ENCODE measurements at regions of chr2 and their contacts with region 1.

Region 1: GRCh38 chr2:161381546-161381945 is 34.6 kb upstream of the TBR1 start:
- DNase-seq: no peak
- ATAC-seq: no peak
- H3K4me3 ChIP-seq: no peak overlapping the region
- H3K27ac ChIP-seq: no peak overlapping the region
- H3K4me1 ChIP-seq: no peaks in the 10 kb centered on the region
- H3K27me3 ChIP-seq: no peaks in the 10 kb centered on the region
- CTCF ChIP-seq: no peak
- POLR2A ChIP-seq: no peak
- RAD21 ChIP-seq: no peak

Region 2: DNA sequence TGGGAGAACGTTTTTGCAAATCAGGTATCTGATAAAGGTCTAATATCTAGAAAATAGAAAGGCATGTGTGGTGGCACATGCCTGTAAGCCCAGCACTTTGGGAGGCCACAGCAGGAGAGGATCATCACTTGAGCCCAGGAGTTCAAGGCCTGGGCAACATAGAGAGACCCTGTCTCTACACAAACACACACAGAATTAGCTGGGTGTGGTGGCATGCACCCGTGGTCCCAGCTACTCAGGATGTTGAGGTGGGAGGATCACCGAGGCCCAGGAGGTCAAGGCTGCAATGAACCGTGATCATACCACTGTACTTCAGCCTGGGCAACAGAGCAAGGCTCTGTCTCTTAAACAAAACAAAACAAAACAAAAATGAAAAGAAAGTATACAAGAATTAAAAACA is 20.8 kb after region 1 on chr2:
- CTCF ChIA-PET with region 1: no interaction called
- POLR2A ChIA-PET with region 1: no interaction called
- dilution Hi-C with region 1: no loop called
- in situ Hi-C with region 1: no loop called
- intact Hi-C with region 1: no loop called
- DNase-seq: no peak
- ATAC-seq: no peak
- H3K4me3 ChIP-seq: no peak overlapping the region
- H3K27ac ChIP-seq: no peak overlapping the region
- H3K4me1 ChIP-seq: no peaks in the 10 kb centered on the region
- H3K27me3 ChIP-seq: no peaks in the 10 kb centered on the region
- CTCF ChIP-seq: no peak
- POLR2A ChIP-seq: no peak
- RAD21 ChIP-seq: no peak

Region 3: GRCh38 chr2:161414042-161415033 is 32.8 kb after region 1 on chr2:
- CTCF ChIA-PET with region 1: no interaction called
- POLR2A ChIA-PET with region 1: interaction called, 23 read pairs
- dilution Hi-C with region 1: no loop called
- in situ Hi-C with region 1: no loop called
- intact Hi-C with region 1: no loop called
- DNase-seq: peak; percentile 11
- ATAC-seq: peak; percentile 78
- H3K4me3 ChIP-seq: peak overlapping the region; percentile 43
- H3K27ac ChIP-seq: no peak overlapping the region
- H3K4me1 ChIP-seq: peaks cover 4% of the 10 kb centered on the region
- H3K27me3 ChIP-seq: peaks cover 47% of the 10 kb centered on the region
- CTCF ChIP-seq: no peak
- POLR2A ChIP-seq: no peak
- RAD21 ChIP-seq: no peak